K562 (cell line): ENCODE measurements at regions of chr7 and their contacts with region 1.

Region 1: GRCh38 chr7:98021588-98022351 is 31.8 kb upstream of the OCM2 start:
- DNase-seq: peak; percentile 83 to 94 (median 88)
- ATAC-seq: peak; percentile 97
- H3K4me3 ChIP-seq: no peak overlapping the region
- H3K27ac ChIP-seq: no peak overlapping the region
- H3K4me1 ChIP-seq: no peaks in the 10 kb centered on the region
- H3K27me3 ChIP-seq: peaks cover 13 to 48% of the 10 kb centered on the region in 2 experiments; a peak in 4 of 5 replicates
- CTCF ChIP-seq: peak; percentile 93 to 96 (median 94)
- EP300 ChIP-seq: no peak
- POLR2A ChIP-seq: no peak
- RAD21 ChIP-seq: peak; percentile 87 to 96

Region 2: GRCh38 chr7:97971990-97972943 is 49.5 kb before region 1 on chr7:
- CTCF ChIA-PET with region 1: no interaction called
- POLR2A ChIA-PET with region 1: no interaction called
- in situ Hi-C with region 1: no loop called
- intact Hi-C with region 1: no loop called
- DNase-seq: peak; percentile 93 to 94 (median 94)
- ATAC-seq: peak; percentile 98
- H3K4me3 ChIP-seq: peak overlapping the region; percentile 100
- H3K27ac ChIP-seq: peak overlapping the region; percentile 87
- H3K4me1 ChIP-seq: peaks cover 0 to 10% of the 10 kb centered on the region in 2 experiments; a peak in 3 of 5 replicates
- H3K27me3 ChIP-seq: no peaks in the 10 kb centered on the region
- CTCF ChIP-seq: peak; percentile 67 to 79 (median 72)
- EP300 ChIP-seq: peak; percentile 47
- POLR2A ChIP-seq: peak; percentile 86
- RAD21 ChIP-seq: peak in 1 of 2 experiments; percentile 28; a peak in 1 of 4 replicates

Region 3: GRCh38 chr7:98149116-98149692 is 127.4 kb after region 1 on chr7:
- CTCF ChIA-PET with region 1: no interaction called
- POLR2A ChIA-PET with region 1: no interaction called
- in situ Hi-C with region 1: no loop called
- intact Hi-C with region 1: no loop called
- DNase-seq: no peak
- ATAC-seq: no peak
- H3K4me3 ChIP-seq: no peak overlapping the region
- H3K27ac ChIP-seq: no peak overlapping the region
- H3K4me1 ChIP-seq: no peaks in the 10 kb centered on the region
- H3K27me3 ChIP-seq: no peaks in the 10 kb centered on the region
- CTCF ChIP-seq: no peak
- EP300 ChIP-seq: no peak
- POLR2A ChIP-seq: no peak
- RAD21 ChIP-seq: no peak

Region 4: DNA sequence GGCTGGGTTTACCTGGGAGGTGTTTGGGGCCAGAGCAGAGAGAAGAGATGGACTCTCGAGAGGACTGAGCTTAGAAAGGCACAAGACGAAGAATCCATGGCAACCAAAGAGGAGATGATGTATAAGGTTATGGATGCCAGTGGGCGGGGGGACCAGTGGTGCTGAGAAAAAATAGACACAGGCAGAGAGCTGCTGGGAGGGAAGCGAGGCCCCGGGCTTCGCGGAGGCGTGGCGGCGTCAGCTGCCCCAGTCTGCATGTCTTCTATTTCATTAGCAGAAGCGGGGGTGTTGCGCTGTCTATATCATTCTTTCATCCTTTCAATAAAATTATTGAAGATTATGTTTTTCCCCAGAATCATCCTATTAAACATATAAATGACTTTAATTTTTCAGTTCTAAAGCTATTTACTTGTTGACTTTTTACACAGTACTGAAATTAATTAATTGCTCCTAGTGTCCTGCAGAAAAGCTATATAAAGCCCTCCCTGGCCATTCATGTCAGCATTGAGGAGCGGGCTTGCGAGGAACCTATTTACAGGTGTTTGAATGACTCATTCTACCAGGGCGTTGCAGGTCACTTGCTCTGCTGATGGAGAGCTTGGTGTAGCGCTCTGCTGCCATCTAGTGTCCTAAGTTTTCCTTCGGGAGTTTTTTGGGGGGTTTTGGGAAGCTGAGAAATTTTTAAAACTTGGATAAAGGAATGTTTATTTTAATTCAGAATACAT is 146.6 kb after region 1 on chr7:
- CTCF ChIA-PET with region 1: interaction called, 94 read pairs
- POLR2A ChIA-PET with region 1: interaction called, 37 read pairs
- in situ Hi-C with region 1: loop called (anchors 5 kb)
- intact Hi-C with region 1: loop called (anchors 1 kb)
- DNase-seq: peak; percentile 80 to 83 (median 82)
- ATAC-seq: peak; percentile 81
- H3K4me3 ChIP-seq: no peak overlapping the region
- H3K27ac ChIP-seq: no peak overlapping the region
- H3K4me1 ChIP-seq: peaks cover 0 to 12% of the 10 kb centered on the region in 2 experiments; a peak in 1 of 5 replicates
- H3K27me3 ChIP-seq: no peaks in the 10 kb centered on the region
- CTCF ChIP-seq: peak; percentile 83 to 96 (median 88)
- EP300 ChIP-seq: 0 out of 2 replicates have a peak, but pooled peaks have one; percentile 21
- POLR2A ChIP-seq: no peak
- RAD21 ChIP-seq: peak; percentile 87 to 93

Region 5: DNA sequence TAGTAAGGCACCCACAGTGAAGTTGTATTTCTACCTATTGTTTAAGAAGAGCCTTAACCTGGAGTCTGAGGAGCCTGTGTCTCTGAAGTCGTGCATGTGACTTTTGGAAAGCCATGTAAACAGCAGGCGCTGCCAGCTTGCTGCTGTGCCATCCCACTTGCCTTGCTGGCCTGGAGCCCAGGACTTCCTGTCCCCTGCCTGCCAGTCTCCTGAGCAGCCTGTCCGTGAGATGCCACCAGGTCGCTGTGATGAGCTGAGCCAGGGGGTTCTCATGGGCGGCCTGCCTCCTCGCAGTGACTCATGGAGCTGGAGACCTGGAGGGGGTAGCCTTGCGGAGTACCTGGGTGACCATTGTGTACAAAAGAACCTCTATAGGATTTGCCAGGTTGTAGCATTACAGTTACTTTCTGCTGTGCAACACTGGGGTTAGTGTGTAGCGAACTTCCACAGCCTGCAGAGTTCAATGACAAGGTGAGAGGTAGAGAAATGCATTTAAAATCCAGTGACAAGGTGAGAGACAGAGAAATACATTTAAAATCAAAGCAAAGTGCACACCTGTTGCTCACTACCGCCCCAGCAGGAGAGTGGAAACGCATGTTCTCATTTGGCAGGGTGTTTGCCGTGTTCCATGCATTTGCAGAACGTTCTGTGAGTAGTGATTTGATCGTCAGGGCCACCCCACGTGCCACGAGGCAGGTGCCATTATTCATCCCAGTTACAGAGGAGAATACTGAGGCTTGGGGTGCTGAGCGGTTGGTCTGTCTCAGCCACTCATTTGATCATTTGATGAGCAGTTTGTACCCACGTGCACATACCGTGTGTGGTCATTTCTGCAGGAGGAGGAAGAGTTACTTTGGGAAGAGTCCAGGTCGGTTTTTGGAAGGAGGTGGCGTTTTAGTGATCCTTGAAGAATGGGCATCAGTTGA is 152.8 kb after region 1 on chr7:
- CTCF ChIA-PET with region 1: interaction called, 94 read pairs
- POLR2A ChIA-PET with region 1: interaction called, 3 read pairs
- in situ Hi-C with region 1: loop called (anchors 5 kb)
- intact Hi-C with region 1: no loop called
- DNase-seq: peak in 1 of 4 experiments; percentile 6
- ATAC-seq: peak; percentile 55
- H3K4me3 ChIP-seq: no peak overlapping the region
- H3K27ac ChIP-seq: no peak overlapping the region
- H3K4me1 ChIP-seq: peaks cover 14 to 15% of the 10 kb centered on the region in 2 experiments
- H3K27me3 ChIP-seq: no peaks in the 10 kb centered on the region
- CTCF ChIP-seq: no peak
- EP300 ChIP-seq: no peak
- POLR2A ChIP-seq: no peak
- RAD21 ChIP-seq: no peak

Region 6: DNA sequence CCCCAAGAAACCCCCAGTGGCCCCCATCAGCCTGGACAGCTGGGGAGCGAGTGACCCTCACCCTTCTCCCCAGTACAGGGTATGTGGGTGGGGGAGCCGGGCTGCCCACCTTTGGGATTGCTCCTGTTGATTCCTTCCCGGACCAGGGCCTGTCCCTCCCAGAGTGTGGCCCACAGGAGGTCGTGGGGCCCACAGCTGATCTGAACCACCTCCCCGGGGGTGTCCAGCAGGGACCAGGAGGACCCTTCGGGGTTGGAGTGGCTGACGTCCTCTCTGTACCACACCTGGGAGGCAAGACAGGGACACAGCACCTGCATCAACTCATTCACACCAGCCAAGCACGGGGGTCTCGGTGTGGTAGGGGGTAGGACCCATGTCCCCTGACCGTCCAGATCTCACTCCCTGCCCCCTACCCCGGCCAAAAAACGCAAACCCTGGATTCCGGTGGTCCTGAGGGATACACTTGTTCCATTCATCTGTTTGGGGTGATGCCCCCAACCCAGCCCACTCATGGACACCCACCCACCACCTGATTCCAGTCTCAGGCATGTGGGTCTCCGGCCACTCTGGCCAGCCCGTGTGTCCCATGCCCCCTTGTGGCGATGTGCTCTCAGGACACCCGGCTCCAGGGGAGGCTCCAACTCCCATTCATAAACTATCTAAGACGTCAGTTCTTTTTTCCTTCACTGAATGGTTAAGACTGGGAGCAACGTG is 219.3 kb after region 1 on chr7:
- CTCF ChIA-PET with region 1: interaction called, 5 read pairs
- POLR2A ChIA-PET with region 1: no interaction called
- in situ Hi-C with region 1: no loop called
- intact Hi-C with region 1: loop called (anchors 1 kb)
- DNase-seq: peak; percentile 57 to 74 (median 67)
- ATAC-seq: peak; percentile 94
- H3K4me3 ChIP-seq: no peak overlapping the region
- H3K27ac ChIP-seq: no peak overlapping the region
- H3K4me1 ChIP-seq: peaks cover 0 to 18% of the 10 kb centered on the region in 2 experiments; a peak in 2 of 5 replicates
- H3K27me3 ChIP-seq: peaks cover 0 to 7% of the 10 kb centered on the region in 2 experiments; a peak in 1 of 5 replicates
- CTCF ChIP-seq: peak; percentile 71 to 83 (median 75)
- EP300 ChIP-seq: no peak
- POLR2A ChIP-seq: no peak
- RAD21 ChIP-seq: peak; percentile 16 to 55; a peak in 2 of 4 replicates

Region 7: DNA sequence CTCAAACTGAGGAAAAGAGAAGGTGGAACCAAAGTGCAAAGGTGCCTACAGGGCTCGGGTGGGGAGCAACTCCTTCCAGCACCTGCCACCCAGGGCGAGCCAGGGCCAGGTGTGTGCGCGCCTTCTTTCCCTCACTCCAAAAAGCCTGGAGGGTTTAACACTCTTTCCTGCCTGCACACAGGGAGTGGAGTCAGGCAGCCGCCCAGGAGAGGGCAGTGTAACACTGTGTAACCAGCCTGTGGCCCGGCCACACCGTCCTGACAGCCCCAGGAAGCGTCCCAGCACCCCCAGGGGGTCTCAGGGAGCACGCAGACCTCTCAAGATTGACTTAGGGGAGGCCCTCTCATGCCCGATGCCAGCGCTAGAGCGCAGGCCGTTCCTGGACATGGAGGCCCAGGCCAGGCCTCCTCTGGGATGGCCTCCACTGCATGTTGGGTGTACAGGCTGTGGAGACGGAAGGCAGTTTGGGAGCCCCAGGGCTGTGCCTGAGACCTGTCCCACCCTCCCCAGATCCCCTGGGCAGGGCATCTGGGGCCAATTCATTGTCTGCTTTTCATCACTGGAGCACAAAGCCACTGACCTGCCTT is 273.1 kb after region 1 on chr7:
- CTCF ChIA-PET with region 1: no interaction called
- POLR2A ChIA-PET with region 1: no interaction called
- in situ Hi-C with region 1: no loop called
- intact Hi-C with region 1: loop called (anchors 5 kb)
- DNase-seq: peak; percentile 82 to 87 (median 85)
- ATAC-seq: peak; percentile 97
- H3K4me3 ChIP-seq: no peak overlapping the region
- H3K27ac ChIP-seq: no peak overlapping the region
- H3K4me1 ChIP-seq: peaks cover 0 to 10% of the 10 kb centered on the region in 2 experiments; a peak in 2 of 5 replicates
- H3K27me3 ChIP-seq: peaks cover 0 to 49% of the 10 kb centered on the region in 2 experiments; a peak in 2 of 5 replicates
- CTCF ChIP-seq: peak; percentile 87 to 93 (median 91)
- EP300 ChIP-seq: no peak
- POLR2A ChIP-seq: no peak
- RAD21 ChIP-seq: peak; percentile 83 to 92

Region 8: GRCh38 chr7:98400542-98401340 is 379.0 kb after region 1 on chr7 and contains the start of gene BAIAP2L1:
- CTCF ChIA-PET with region 1: no interaction called
- POLR2A ChIA-PET with region 1: no interaction called
- in situ Hi-C with region 1: no loop called
- intact Hi-C with region 1: loop called (anchors 5 kb)
- DNase-seq: peak; percentile 95 to 100 (median 100)
- ATAC-seq: peak; percentile 96
- H3K4me3 ChIP-seq: peak within 1 kb of the TSS; percentile 66
- H3K27ac ChIP-seq: peak within 1 kb of the TSS; percentile 88
- H3K4me1 ChIP-seq: peaks cover 8 to 13% of the 10 kb centered on the region in 2 experiments; a peak in 4 of 5 replicates
- H3K27me3 ChIP-seq: peaks cover 17 to 34% of the 10 kb centered on the region in 2 experiments
- CTCF ChIP-seq: peak in 1 of 3 experiments; percentile 84; a peak in 3 of 6 replicates
- EP300 ChIP-seq: no peak
- POLR2A ChIP-seq: peak; percentile 60; the same call in 1 of the 2 replicates
- RAD21 ChIP-seq: no peak; a peak in 2 of 4 replicates
- polyA plus RNA-seq, gene BAIAP2L1: 4.2 to 4.3 TPM